ENCODE measurements at regions of chr11 and their contacts with region 1.

Region 1: GRCh38 chr11:94537031-94537600 is 6.6 kb upstream of the FUT4 start:
- H3K4me3 Mint-ChIP-seq: no peak overlapping the region
- H3K27ac Mint-ChIP-seq: no peak overlapping the region
- H3K4me1 Mint-ChIP-seq: peaks cover 24% of the 10 kb centered on the region
- H3K27me3 Mint-ChIP-seq: no peaks in the 10 kb centered on the region

Region 2: GRCh38 chr11:94757037-94757735 is 220.1 kb after region 1 on chr11:
- intact Hi-C with region 1: loop called (anchors 10 kb)
- H3K4me3 Mint-ChIP-seq: no peak overlapping the region
- H3K27ac Mint-ChIP-seq: no peak overlapping the region
- H3K4me1 Mint-ChIP-seq: no peaks in the 10 kb centered on the region
- H3K27me3 Mint-ChIP-seq: peaks cover under 1% of the 10 kb centered on the region

Measured in dendritic cell treated with granulocyte-macrophage colony-stimulating factor and Interleukin-4, amounts not matched to agents 40 ng/mL and 50 ng/mL, for 4 days (primary cell).